ENCODE measurements at regions of chr19 and their contacts with region 1.

Region 1: DNA sequence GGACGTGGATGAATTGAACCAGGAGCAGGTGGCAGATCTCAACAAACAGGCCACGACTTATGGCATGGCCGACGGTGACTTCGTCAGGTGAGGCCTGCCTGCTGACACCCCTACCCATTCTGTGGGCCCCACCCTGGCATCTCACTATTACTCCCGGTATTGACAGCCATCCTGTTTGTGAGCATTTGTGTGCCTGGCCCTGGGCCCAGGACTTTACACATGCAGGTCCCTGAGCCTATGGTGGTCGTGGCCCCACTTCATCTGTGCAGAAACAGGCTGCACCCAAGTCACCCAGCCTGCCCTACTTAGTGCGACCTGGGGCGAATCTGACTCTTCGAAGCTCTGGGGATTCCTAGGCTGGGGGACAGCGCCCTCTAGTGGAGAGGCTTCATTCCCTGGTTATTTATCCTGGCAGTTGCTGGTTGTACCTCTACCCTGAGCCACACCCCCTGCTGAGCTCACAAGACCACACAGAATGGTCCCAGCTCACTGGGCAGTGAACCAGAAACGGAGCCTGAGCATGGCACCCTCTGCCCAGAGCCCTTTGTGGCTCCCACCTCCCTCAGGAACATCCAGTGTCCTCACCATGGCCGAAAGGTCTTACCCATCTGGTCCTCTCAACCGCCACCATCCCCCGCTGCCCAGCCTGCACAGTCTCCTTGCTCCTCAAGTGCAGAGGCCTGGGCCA is 16.9 kb downstream of the ZNF296 start:
- DNase-seq: no peak
- H3K4me3 ChIP-seq: no peak overlapping the region
- CTCF ChIP-seq: peak; percentile 74

Region 2: GRCh38 chr19:45038931-45039893 is 20.2 kb before region 1 on chr19 and contains the start of gene CLASRP:
- CTCF ChIA-PET with region 1: interaction called, 85 read pairs
- POLR2A ChIA-PET with region 1: interaction called, 4 read pairs
- DNase-seq: peak; percentile 36
- H3K4me3 ChIP-seq: peak within 1 kb of the TSS; percentile 99
- CTCF ChIP-seq: no peak

Region 3: DNA sequence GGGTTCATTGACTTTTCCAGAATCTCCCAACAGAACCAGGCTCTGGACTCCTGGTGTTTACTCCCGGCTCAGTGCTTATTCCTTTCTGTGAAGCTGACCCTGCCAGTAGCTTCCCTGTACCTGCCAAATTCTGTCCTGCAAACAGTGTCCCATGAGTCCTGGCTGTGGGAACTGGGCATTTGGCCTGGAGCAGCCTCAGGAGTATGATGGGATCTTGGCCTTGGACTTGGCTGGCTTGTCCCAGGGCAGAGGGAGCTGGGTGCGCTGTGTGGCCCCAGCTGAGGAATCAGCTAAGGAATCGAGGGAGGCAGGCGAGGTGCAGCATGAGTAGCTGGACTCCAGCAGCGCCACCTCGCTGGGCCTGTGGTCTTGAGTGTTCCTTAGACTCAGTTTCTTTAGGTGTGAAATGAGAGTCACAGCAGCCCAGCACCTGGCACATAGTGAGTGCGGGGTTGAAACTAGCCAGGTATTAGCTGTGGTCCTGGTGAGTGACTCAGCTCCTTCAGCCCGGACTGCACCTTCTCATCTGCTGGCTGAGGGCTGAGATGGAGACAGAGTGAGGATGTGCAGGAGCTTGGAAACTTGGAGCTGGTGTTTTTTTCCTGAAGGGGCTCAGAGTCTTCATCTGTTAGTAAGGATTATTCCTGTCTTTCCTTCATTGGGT is 10.2 kb before region 1 on chr19:
- CTCF ChIA-PET with region 1: interaction called, 85 read pairs
- POLR2A ChIA-PET with region 1: interaction called, 3 read pairs
- DNase-seq: no peak
- H3K4me3 ChIP-seq: no peak overlapping the region
- CTCF ChIP-seq: no peak

Region 4: GRCh38 chr19:45079063-45079910 is 19.9 kb after region 1 on chr19 and contains the start of gene GEMIN7:
- CTCF ChIA-PET with region 1: interaction called, 12 read pairs
- POLR2A ChIA-PET with region 1: no interaction called
- DNase-seq: no peak
- H3K4me3 ChIP-seq: peak within 1 kb of the TSS; percentile 97
- CTCF ChIP-seq: no peak

Region 5: DNA sequence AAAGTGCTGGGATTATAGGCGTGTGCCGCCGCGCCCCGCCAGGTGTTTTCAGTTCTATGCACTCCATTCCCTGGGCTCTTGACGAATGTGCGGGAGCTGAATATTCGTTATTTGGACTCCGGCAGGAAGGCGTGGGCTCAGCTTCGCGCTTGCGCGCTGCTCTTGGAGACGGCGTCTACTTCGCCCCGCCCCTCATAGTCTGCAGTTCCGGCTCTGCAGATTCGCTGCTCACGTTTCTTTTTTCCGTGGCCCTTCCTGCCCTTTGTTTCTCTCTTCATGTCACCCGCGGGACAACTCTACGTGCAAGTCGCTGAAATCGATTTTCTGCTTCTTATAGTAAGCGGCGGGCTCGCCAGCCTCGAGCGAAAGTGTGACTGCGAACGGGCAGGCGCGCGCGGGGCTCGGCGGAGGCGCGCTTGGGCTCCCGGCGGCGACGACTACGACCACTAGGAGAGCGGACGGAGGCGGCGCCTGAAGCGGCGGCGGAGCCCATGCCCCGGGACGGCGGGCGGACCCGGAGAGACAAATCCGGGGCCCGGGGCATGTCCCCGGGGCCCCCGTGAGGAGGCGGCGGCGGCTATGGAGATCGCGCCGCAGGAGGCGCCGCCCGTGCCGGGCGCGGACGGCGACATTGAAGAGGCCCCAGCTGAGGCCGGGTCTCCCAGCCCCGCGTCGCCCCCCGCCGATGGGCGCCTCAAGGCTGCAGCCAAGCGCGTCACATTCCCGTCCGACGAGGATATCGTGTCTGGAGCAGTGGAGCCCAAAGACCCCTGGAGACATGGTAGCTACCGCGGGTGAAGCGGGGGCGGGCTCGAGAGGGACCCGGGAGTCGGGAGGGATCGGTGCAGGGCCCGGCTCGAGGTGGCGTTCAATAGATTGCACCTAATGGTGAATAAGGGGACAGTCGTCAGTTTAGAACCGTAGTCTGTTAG is 33.6 kb after region 1 on chr19 and contains the start of gene PPP1R37:
- CTCF ChIA-PET with region 1: interaction called, 10 read pairs
- POLR2A ChIA-PET with region 1: no interaction called
- DNase-seq: peak; percentile 69
- H3K4me3 ChIP-seq: peak within 1 kb of the TSS; percentile 92
- CTCF ChIP-seq: peak; percentile 53

Measured in AG04449 (cell line).